Left cardiac atrium (tissue), 4 donors: ENCODE measurements at regions of chr10 and their contacts with region 1.

Region 1: GRCh38 chr10:69496352-69497230 is 45.3 kb downstream of the TSPAN15 start:
- DNase-seq: no peak
- ATAC-seq: peak in 1 of 2 donors; percentile 8

Region 2: GRCh38 chr10:69348816-69349541 is 147.6 kb before region 1 on chr10:
- intact Hi-C with region 1: no loop called
- DNase-seq: peak; percentile 76
- ATAC-seq: peak; percentile 54 to 83

Region 3: GRCh38 chr10:69408318-69409175 is 88.0 kb before region 1 on chr10:
- intact Hi-C with region 1: no loop called
- DNase-seq: peak; percentile 97
- ATAC-seq: peak; percentile 86 to 90

Region 4: GRCh38 chr10:69463886-69464285 is 32.7 kb before region 1 on chr10:
- intact Hi-C with region 1: loop called in 1 of 2 experiments (anchors 1 kb)
- DNase-seq: no peak
- ATAC-seq: no peak

Region 5: DNA sequence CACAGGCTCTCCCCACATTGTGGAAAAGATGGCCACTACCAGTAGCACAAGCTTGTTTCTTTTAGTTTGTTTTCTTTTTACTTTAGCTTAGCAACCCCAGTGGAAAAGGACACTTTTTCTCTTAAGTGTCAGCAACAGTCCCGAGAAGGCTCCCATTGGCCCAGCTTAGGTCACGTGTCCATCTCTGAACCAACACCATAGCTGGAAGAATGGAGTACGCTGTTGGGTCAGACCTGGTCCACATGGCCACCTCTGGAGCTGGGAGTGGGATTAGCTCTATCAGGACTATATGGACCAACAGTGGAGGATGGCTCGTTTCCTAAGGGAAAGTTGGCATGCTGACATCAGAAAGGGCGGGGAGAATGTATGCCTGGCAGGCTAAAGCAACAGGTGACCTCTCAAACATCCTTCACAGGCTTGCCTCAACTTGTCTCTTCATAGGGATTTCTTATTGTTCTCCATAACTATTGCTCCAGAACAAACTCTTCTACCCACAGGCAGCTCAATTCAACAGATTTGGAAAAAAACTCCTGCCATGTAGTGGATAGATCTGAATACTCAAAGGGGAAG is 104.3 kb after region 1 on chr10:
- intact Hi-C with region 1: no loop called
- DNase-seq: no peak
- ATAC-seq: no peak

Region 6: GRCh38 chr10:69668721-69669120 is 172.1 kb after region 1 on chr10:
- intact Hi-C with region 1: no loop called
- DNase-seq: no peak
- ATAC-seq: no peak